ENCODE measurements at regions of chr14 and their contacts with region 1.

Region 1: GRCh38 chr14:22570132-22570949 is 18.7 kb downstream of the DAD1 start:
- DNase-seq: no peak
- ATAC-seq: peak; percentile 78

Region 2: DNA sequence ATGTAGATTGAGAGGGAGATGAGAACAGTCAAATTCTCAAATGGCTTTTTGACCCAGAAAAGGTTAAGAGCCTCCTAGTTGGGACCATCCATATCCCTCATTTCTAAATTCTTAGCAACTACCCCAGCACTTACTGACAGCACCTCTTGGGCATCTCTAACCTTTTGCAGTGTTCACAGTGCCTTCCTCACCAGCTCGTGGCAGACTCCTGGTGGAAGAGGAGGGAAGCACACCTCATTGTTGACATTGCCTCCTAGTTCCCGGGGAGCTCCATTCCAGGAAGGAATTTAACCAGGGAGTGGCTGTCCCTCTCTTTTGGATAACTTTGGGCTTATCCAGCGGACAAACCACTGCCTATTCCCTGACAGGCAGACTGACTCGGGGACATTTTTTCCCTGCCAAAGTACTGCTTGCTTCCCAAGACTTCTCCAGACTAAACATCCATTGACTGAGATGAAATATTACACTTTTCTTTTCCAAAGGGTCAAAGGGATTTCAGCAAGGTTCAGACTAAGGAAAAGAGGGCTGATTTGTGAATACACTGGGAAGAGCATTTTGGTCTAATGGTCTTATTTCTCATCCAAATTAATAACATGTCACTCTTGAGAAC is 82.8 kb after region 1 on chr14:
- intact Hi-C with region 1: loop called (anchors 5 kb)
- DNase-seq: peak; percentile 41
- ATAC-seq: peak; percentile 85

Measured in left ventricle myocardium superior (tissue), 1 donor.